ENCODE measurements at regions of chr20 and their contacts with region 1.

Region 1: DNA sequence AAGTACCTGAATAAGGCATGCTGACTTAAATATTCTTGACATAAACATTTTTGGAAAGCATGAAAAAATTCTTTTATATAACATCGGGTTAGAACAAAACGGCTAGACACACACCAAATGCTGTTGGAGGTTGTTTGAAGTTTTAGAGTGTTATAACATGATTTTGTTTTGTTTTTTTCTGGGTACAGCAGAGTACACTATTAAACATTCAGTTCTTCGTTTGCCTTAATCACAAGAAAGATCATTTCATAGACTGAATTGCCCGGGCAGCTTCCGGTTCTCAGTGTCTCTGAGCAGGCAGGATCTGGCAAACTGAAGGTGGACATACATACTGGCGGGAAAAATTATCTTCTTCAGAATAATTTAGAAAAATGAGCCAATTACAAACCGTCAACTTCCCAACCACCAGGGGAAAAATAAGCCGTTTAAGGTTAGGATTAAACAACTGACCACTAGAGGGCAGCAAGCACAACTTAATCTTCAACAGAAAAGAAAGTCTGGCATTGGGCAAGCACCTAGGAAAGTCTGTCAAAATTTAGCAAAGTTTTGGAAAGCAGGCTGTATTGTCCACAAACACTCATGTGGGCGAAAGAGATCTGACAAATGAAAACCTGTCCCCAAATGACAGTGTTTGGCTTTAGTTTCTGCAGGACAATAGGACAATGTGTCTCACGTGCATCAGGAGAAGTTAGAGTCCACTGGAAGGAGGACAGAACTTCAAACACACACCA is 15.0 kb downstream of the ZNF217 start:
- DNase-seq: peak in 6 of 7 donors; percentile 67 to 79 (median 74)
- H3K4me3 ChIP-seq: peak overlapping the region in 1 of 4 donors; percentile 17
- H3K27ac ChIP-seq: peak overlapping the region in 3 of 5 donors; percentile 17 to 89 (median 64)
- H3K4me1 ChIP-seq: peaks cover 10 to 34% of the 10 kb centered on the region in 2 donors
- H3K27me3 ChIP-seq: no peaks in the 10 kb centered on the region
- CTCF ChIP-seq: peak; percentile 94 to 100 (median 98)
- POLR2A ChIP-seq: no peak

Region 2: GRCh38 chr20:53238121-53238660 is 340.5 kb before region 1 on chr20:
- intact Hi-C with region 1: no loop called
- DNase-seq: no peak
- H3K4me3 ChIP-seq: no peak overlapping the region
- H3K27ac ChIP-seq: no peak overlapping the region
- H3K4me1 ChIP-seq: no peaks in the 10 kb centered on the region
- H3K27me3 ChIP-seq: no peaks in the 10 kb centered on the region
- CTCF ChIP-seq: no peak
- POLR2A ChIP-seq: no peak

Region 3: GRCh38 chr20:53869466-53870258 is 291.0 kb after region 1 on chr20:
- intact Hi-C with region 1: loop called in 1 of 2 experiments (anchors 5 kb)
- DNase-seq: peak; percentile 61 to 84 (median 66)
- H3K4me3 ChIP-seq: no peak overlapping the region
- H3K27ac ChIP-seq: no peak overlapping the region
- H3K4me1 ChIP-seq: peaks cover 7 to 24% of the 10 kb centered on the region in 2 donors
- H3K27me3 ChIP-seq: no peaks in the 10 kb centered on the region
- CTCF ChIP-seq: peak; percentile 48 to 90 (median 80)
- POLR2A ChIP-seq: no peak

Region 4: GRCh38 chr20:53939572-53940359 is 361.1 kb after region 1 on chr20:
- intact Hi-C with region 1: loop called in 1 of 2 experiments (anchors 10 kb)
- DNase-seq: peak; percentile 69 to 96 (median 83)
- H3K4me3 ChIP-seq: no peak overlapping the region
- H3K27ac ChIP-seq: peak overlapping the region in 2 of 5 donors; percentile 25 to 47
- H3K4me1 ChIP-seq: peaks cover 0 to 34% of the 10 kb centered on the region in 2 donors
- H3K27me3 ChIP-seq: no peaks in the 10 kb centered on the region
- CTCF ChIP-seq: peak in 5 of 6 experiments; percentile 54 to 71 (median 65)
- POLR2A ChIP-seq: no peak

Measured in adrenal gland (tissue), 19 donors.